Posterior vena cava (tissue), 2 donors: ENCODE measurements at regions of chr5 and their contacts with region 1.

Region 1: DNA sequence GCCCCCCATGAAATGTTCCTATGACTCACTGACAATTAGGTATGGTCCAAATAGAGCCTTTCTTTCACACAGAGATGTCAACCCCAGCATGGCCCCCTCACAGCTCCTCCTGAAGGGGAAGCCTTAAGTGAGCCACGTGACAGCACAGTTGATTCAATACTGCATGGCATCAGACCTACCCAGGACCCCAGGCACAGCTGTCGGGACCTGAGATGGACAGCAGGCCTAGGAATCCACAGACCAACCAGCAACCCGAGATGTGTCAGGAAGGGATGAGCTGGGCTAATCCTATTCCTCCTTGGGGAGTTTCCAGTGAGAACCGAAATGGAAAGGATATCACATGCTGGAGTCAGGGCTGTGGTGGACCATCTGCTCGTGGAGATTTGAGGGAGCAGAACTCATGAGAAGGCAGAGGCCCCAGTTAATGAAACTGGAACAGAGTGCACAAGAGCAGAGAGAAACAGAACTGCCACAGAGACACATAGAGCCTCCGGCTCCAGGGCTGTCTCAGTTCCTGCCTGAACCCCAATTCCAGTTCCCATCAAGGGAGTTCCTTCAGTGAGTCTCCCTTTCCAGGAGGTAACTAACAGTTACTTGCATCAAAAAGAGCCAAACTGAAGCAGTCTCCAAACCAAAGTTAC is 42.1 kb upstream of the SMIM23 start:
- DNase-seq: no peak

Region 2: GRCh38 chr5:171647032-171647903 is 96.3 kb before region 1 on chr5:
- intact Hi-C with region 1: loop called in 1 of 2 experiments (anchors 10 kb)
- DNase-seq: no peak

Region 3: DNA sequence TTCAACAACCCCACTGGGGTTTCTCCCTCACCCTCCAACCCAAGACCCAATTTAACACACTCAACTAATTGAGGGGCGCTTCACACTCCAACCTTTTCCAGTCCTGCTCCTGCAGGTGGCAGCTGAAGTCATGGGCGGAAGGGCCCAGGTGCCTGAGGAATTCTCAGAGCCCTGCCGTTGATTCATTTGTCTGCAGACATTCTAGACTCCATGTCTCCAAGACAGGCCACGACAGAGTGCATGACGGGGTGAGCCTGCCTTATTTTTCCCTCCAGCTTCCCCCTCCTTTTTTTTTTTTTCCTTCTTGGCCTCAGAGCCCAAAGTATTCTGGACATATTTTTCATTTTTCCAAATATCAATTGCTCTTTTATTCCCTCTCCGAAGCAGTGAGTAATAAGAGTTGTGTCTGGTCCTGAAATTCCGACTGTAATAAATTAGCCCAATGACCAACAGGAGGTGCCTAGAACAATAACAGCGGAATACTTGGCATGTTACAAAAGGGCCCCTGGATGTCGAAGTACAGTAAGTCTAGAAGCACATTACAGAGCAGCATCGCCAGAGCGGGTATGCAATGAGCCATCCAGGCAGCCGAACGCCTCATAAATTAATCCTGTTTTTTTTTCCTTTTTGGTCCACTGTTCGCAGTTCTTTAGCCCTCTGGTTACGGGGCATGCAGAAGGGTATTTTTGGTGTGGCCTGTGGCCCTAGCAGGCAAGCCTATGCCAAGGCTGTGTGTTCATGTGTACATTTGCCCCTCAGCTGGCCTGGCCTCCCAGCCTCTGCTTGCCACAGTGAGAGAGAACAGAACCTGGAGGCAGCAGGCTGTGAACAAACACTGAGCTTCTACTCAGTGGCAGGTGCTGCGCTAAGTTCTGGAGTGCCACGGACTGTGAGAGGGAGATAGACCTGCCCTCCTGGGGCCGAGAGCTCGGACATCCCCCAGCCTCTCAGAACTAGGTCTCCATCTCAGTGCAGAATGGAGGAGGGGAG is 33.5 kb after region 1 on chr5:
- intact Hi-C with region 1: loop called in 1 of 2 experiments (anchors 1 kb)
- DNase-seq: no peak

Region 4: DNA sequence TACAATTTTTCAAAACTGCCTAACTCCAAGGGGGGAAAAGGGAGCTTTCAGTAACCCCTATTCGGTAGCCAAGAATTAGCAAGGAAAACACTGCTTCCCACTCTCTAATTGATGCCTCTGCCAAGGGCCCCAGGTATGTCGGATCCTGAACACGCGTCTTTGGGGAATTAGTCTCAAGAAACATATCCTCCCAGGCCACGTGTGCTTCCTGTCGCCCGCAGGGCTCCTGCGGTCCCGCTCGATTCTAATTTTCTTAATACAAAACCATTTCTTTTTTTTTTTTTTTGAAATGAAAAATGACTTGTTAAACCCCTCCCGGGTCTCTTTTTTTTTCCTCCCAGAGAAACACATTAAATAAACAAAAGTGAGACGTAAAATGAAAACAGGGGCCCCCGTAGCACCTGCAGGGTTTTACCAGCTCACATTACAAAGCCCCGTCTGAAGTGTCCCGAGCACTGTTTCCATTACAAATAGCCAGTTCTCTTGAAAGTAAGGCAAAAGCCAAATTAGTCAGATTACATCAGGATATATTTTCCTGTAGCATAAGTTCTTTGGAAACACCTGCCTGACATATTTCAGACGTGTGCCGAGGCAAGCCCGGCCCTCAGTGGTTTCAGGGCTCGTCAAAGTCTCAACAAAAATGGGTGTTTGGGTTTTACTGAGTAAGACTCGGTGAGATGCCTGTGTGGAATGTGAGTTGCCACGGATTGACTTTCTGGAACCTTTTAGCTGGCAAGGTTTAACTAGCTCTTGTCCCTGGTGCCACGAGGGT is 63.6 kb after region 1 on chr5:
- intact Hi-C with region 1: no loop called
- DNase-seq: no peak